ENCODE measurements at regions of chr16 and their contacts with region 1.

Region 1: DNA sequence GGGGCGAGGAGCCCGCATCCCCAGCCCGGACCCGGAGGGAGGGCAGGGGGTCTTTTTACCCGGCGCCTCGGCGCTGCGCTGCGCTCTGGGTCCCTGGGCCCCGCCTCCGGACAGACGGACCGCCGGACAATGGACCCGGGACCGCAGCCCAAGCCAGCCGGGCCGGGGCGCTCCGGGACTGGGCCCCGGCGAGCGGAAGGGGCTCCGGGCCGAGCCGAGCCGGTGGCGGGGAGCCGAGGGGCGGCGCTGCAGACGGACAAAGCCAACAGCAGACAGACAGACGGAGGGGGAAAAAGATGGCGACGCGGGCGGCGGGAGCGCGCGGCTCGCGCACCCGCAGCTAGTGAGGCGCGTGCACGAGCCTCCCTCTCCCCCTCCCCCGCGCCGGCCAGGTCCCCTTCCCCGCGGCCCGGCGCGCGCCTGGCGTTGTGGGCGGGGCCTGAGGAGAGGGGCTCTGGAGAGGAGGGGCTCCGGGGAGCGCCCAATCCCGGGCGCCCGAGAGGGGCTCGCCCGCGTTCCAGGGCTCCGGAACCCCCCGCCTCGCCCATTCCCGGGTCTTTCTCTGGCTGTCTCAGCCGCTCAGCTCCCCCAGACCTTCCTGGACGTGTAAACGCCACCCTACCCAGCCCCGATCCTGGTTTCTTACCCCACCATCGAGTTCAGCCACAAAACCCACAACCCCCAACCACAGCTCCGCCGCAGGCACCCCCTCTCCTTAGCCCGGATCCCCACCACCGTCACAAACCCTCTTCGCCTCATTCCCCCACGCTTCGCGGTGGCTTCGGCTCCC is at the start of gene ZNF821:
- DNase-seq: peak; percentile 100
- H3K4me3 ChIP-seq: peak within 1 kb of the TSS; percentile 88 to 97
- H3K27ac ChIP-seq: peak within 1 kb of the TSS; percentile 70 to 84
- H3K4me1 ChIP-seq: peaks cover 0 to 8% of the 10 kb centered on the region in 2 experiments; a peak in 2 of 4 replicates
- H3K27me3 ChIP-seq: no peaks in the 10 kb centered on the region
- CTCF ChIP-seq: peak; percentile 50
- EP300 ChIP-seq: no peak
- RAD21 ChIP-seq: no peak
- polyA plus RNA-seq, gene ZNF821: 7.7 and 8.8 TPM in 2 replicates

Region 2: DNA sequence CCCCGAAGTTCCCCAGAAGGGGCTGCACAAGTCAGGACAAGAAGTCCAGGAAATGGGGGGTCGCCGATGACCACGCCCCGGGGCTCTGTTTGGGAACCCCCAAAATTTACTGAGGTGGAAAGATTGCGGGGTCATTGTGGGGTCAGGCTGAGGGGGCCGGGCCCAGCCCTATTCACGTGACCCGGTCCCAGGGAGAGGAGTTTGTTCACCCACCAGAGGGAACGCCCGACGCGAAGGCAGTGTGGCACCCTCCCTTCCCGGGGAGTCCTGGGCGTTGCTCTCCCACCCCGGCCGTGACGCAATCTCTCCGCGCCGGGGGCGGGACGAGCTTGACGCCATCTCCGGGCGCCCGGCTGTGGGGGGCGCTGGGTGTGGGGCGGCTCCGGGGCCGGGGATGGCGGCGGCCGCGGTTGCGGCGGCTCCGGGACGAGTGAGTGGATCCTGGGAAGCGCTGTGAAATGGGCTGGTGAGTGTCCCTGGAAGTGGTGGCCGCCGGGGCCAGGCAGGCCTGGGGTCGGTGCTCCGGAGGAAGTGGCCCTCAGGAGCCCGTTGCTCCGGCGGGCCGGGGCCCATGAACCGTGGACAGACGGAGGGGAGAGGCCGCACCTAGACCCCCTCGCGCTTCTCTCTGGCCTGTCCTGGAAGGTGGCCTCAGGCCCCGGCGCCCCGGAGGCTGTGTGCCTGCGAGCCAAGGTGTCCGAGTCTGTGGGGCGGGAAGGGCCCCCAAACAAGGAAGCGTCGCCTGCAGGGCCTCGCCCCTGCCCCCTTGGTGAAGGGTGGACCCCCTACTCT is 38.2 kb before region 1 on chr16 and contains the start of gene ATXN1L:
- CTCF ChIA-PET with region 1: interaction called, 33 read pairs
- POLR2A ChIA-PET with region 1: no interaction called
- DNase-seq: peak; percentile 99
- H3K4me3 ChIP-seq: peak within 1 kb of the TSS; percentile 91 to 95
- H3K27ac ChIP-seq: peak within 1 kb of the TSS; percentile 63 to 67; a peak in 3 of 4 replicates
- H3K4me1 ChIP-seq: peaks cover 0 to 7% of the 10 kb centered on the region in 2 experiments; a peak in 2 of 4 replicates
- H3K27me3 ChIP-seq: no peaks in the 10 kb centered on the region
- CTCF ChIP-seq: no peak
- EP300 ChIP-seq: no peak
- RAD21 ChIP-seq: no peak
- polyA plus RNA-seq, gene ATXN1L: 8.0 and 11.0 TPM in 2 replicates

Region 3: GRCh38 chr16:71865173-71865863 is 18.7 kb before region 1 on chr16:
- CTCF ChIA-PET with region 1: interaction called, 57 read pairs
- POLR2A ChIA-PET with region 1: no interaction called
- DNase-seq: no peak
- H3K4me3 ChIP-seq: no peak overlapping the region
- H3K27ac ChIP-seq: no peak overlapping the region
- H3K4me1 ChIP-seq: no peaks in the 10 kb centered on the region; a peak in 1 of 4 replicates
- H3K27me3 ChIP-seq: no peaks in the 10 kb centered on the region
- CTCF ChIP-seq: no peak
- EP300 ChIP-seq: no peak
- RAD21 ChIP-seq: no peak

Region 4: DNA sequence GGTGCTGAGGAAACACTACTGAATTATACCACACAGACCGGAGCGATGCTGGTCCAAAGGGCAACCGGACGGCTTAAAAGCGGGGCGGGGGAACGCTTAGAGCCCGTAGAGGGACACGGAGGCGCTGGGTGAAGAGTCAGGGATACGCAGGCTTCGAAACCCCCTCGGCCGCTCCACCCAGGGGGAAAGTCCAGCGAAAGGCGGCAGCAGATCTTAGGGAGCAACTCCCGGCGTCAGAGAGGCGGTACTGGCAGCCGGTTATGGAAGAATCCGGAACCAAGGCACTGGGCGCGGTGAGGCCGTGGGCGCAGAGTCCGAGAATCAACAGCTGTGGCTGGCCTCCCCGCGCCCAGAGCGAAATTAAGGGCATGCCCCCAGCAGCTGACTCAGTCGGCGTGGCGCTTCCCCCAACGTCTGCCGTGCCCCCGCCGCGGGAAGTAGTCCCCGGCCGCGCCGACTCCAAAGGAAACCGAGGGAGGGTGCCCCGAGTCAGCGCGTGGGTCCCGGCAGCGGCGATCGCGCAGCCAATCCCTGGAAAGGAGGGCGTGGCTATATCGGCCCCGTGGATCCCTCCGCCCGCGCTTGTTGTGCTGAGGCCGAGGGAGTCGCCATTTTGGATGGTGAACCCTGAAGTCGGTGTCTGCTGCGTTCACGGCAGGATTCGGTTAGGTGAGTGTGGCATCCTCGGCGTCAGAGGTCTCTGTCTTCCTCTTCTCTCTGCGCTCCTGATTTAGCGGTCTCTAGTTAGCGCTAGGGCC is 11.1 kb after region 1 on chr16 and contains the start of gene IST1:
- CTCF ChIA-PET with region 1: interaction called, 59 read pairs
- POLR2A ChIA-PET with region 1: interaction called, 13 read pairs
- DNase-seq: peak; percentile 98
- H3K4me3 ChIP-seq: peak within 1 kb of the TSS; percentile 69 to 94
- H3K27ac ChIP-seq: peak within 1 kb of the TSS; percentile 90 to 94
- H3K4me1 ChIP-seq: peaks cover 5 to 6% of the 10 kb centered on the region in 2 experiments; a peak in 1 of 4 replicates
- H3K27me3 ChIP-seq: no peaks in the 10 kb centered on the region
- CTCF ChIP-seq: no peak
- EP300 ChIP-seq: 0 out of 4 replicates have a peak, but pooled peaks have one; percentile 24 to 56
- RAD21 ChIP-seq: no peak
- polyA plus RNA-seq, gene IST1: 133 and 187 TPM in 2 replicates

Region 5: DNA sequence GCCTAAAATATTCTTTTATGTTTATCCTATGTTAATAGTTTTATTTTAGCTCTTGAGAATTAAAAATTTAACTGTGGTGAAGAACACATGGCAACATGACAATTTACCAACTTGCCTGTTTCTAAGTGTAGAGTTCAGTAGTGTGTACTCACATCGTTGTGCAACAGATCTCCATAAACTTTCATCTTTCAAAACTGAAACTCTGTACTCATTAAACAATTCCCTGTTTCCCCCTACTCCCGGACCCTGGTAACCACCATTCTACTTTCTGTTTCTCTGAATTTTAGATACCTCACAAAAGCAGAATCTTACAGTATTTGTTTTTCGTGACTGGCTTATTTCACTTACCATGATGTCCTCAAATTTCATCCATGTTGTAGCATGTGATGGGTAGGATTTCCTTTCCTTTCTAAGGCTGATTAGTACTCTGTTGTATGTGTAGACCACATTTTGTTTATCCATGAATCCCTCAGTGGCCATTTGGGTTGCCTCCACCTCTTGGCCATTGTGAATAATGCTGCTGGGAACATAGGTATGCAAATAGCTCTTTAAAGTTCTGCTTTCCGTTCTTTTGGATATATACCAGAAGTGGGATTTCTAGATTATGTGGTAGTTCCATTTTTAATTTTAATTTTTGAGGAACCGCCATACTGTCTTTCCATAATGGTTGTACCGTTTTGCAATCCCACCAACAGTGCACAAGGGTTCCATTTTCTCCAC is 28.6 kb after region 1 on chr16:
- CTCF ChIA-PET with region 1: interaction called, 10 read pairs
- POLR2A ChIA-PET with region 1: no interaction called
- DNase-seq: no peak
- H3K4me3 ChIP-seq: no peak overlapping the region
- H3K27ac ChIP-seq: no peak overlapping the region
- H3K4me1 ChIP-seq: peaks cover 0 to 3% of the 10 kb centered on the region in 2 experiments; a peak in 1 of 4 replicates
- H3K27me3 ChIP-seq: no peaks in the 10 kb centered on the region
- CTCF ChIP-seq: no peak
- EP300 ChIP-seq: no peak
- RAD21 ChIP-seq: no peak

Region 6: GRCh38 chr16:71973001-71973400 is 89.0 kb after region 1 on chr16:
- CTCF ChIA-PET with region 1: interaction called, 11 read pairs
- POLR2A ChIA-PET with region 1: no interaction called
- DNase-seq: no peak
- H3K4me3 ChIP-seq: no peak overlapping the region
- H3K27ac ChIP-seq: no peak overlapping the region
- H3K4me1 ChIP-seq: no peaks in the 10 kb centered on the region
- H3K27me3 ChIP-seq: no peaks in the 10 kb centered on the region
- CTCF ChIP-seq: no peak
- EP300 ChIP-seq: no peak
- RAD21 ChIP-seq: no peak